Cardiac septum (tissue), 1 donor: ENCODE measurements at regions of chr5 and their contacts with region 1.

Region 1: DNA sequence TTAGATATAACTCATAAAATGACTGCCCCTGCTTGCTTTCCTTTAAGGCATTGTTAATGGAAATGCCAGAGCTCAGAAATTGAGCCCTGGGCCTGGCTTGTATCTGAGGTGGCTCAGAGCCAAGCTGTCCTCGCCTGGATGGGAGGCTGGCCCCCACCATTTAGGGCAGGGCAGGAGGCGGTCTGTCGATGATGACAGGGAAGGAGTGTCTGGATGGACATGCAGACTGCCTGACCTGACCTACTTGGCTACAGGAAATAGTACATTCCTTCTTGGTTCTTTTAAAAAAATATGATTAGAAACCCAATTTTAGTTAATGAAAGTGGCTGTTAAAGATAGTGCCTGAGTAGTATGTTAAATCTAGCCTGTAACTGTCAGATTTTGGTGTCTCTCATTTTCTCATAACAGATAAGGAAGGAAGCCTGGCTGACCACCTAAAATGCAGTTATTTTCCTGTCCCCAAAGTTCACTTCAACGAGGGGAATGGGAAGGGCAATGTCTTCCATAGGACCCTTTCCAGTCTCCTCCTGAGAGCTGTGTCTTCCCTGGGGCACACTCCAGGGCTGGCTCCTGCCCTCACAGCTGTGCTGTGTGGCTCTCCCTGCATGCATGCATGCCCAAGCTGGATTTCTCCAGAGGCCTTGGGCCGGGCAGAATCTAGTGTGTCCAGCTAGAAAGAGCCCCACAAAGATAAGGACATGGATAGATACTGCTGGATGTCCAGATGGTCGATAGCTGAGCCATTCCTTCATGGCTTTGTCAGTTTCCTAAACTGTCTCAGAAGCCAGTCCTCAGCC is 42.3 kb downstream of the MACROH2A1 start:
- DNase-seq: peak; percentile 90

Region 2: DNA sequence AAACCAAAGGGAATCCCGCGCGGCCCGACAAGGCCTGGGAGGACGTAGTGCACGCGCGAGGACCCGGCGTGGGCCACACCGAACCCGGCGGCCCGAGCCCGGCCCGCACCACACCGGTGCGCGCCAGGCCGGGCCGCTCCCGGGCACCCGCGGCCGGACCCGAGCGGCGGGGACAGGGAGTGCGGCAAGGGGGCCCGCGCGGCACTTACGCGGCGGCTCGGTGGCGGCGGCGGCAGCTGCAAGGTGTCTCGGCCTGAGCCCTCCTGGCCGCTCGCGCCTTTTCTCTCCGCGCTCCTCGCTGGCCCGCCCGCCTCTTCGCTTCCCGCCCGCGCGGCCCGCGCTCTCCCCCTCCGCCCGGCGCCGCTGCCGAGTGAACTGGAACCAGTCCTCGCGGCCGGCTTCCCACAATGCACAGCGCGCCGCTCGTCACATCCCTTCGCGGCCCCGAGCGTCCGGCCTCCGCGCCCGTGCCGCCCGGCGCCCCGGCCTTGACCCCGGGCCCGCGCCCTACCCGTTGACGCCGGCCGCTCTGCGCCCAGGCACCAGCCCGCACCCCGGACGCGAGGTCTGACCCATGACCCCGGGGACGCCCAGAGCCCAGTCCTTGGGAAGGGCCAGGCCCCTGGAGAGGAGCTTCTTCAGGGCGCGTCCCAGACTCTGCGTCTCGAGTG is 42.3 kb after region 1 on chr5 and contains the start of gene MACROH2A1:
- intact Hi-C with region 1: loop called (anchors 5 kb)
- DNase-seq: peak; percentile 97
- total RNA-seq, gene MACROH2A1: 112 TPM